Activated T-helper 2 cell treated with anti-CD3 and anti-CD28 coated beads, Interferon-gamma antibody, Interleukin-2, Interleukin-4, amounts not matched to agents 10 μg/mL and 5 μg/mL and 100 μg/mL, durations not matched to agents 14 hours and 24 hours and 36 hours (primary cell): ENCODE measurements at regions of chr7 and their contacts with region 1.

Region 1: DNA sequence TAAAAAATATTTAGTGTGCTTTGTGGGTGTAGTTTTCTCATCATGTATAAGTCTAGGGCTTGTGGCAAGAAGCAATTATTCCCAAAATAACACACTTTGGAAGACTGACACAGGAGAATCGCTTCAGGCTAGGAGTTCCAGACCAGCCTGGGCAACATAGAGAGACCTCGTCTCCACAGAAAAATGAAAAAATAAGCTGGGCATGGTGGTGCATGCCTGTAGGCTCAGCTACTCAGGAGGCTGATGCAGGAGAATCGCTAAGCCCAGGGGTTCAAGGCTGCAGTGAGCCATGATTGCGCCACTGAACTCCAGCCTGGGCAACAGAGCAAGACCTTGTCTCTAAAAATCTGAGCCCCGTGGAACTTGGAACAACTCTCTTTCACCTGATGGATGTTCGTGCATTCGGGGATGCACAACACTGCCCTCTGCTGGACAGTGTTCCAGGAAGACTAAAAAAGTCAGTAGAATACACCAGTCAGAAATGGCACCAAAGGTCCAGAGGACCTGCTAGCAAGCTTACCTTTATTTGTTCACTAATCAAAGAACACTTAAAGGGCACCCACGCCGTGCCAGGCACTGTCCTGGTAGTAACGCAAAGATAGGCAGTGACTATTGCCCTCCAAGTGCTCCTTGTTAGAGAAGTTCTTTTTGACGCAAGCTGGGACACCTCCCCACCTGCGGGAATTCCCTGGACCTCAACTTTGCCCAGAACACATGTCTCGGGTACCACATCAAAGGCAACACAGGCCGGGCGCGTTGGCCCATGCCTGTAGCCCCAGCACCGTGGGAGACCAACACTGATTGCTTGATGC is 81.9 kb upstream of the CALN1 start:
- DNase-seq: peak; percentile 16
- H3K4me3 Mint-ChIP-seq: no peak overlapping the region
- H3K27ac Mint-ChIP-seq: no peak overlapping the region
- H3K4me1 Mint-ChIP-seq: no peaks in the 10 kb centered on the region
- H3K27me3 Mint-ChIP-seq: no peaks in the 10 kb centered on the region

Region 2: DNA sequence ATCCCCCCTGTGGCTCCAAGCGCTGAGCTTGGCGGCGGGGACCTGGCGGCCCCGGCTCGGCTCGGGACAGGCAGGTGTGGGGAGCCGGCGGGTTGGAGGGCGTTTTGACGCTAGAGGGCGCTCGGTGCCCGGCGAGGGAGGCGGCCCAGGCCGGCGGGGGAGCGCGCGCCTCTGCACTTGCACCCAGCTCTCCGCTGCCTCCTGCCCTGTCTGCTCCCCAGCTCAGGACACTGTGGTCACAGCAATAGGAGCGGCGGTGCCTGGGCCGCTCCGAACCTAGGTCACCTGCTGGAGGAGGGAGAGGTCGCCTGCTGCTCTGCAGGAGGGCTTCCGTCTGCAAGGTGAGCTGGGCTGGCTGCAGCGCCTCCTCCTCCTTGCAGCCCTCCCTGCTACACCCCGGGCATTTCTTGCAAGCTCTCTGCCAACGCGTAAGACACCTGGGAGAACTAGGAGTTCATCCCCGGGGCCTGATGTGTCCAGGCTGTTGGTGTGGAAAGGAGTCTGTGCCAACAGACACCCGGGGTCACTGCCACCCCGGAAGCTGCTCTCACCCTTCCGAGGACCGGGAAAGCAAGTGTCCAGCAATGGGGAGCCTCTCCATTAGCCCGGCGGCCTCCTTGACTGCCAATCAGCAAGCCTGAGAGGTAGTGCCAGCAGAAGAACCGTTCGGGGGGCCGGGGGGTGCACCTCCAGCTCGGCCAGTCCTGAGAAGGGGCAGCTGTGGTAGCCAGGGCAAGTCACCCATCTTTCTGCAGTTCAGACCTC is 741.7 kb before region 1 on chr7:
- intact Hi-C with region 1: loop called (anchors 5 kb)
- DNase-seq: peak; percentile 17
- H3K4me3 Mint-ChIP-seq: no peak overlapping the region
- H3K27ac Mint-ChIP-seq: no peak overlapping the region
- H3K4me1 Mint-ChIP-seq: no peaks in the 10 kb centered on the region
- H3K27me3 Mint-ChIP-seq: no peaks in the 10 kb centered on the region